ENCODE measurements at regions of chr6 and their contacts with region 1.

Region 1: GRCh38 chr6:129251669-129252376 is 368.9 kb downstream of the LAMA2 start:
- DNase-seq: peak in 4 of 5 donors; percentile 29 to 64 (median 32)
- H3K4me3 ChIP-seq: no peak overlapping the region
- H3K27ac ChIP-seq: no peak overlapping the region
- H3K4me1 ChIP-seq: no peaks in the 10 kb centered on the region
- H3K27me3 ChIP-seq: no peaks in the 10 kb centered on the region
- CTCF ChIP-seq: peak; percentile 69 to 76 (median 73)
- EP300 ChIP-seq: no peak
- POLR2A ChIP-seq: no peak

Region 2: DNA sequence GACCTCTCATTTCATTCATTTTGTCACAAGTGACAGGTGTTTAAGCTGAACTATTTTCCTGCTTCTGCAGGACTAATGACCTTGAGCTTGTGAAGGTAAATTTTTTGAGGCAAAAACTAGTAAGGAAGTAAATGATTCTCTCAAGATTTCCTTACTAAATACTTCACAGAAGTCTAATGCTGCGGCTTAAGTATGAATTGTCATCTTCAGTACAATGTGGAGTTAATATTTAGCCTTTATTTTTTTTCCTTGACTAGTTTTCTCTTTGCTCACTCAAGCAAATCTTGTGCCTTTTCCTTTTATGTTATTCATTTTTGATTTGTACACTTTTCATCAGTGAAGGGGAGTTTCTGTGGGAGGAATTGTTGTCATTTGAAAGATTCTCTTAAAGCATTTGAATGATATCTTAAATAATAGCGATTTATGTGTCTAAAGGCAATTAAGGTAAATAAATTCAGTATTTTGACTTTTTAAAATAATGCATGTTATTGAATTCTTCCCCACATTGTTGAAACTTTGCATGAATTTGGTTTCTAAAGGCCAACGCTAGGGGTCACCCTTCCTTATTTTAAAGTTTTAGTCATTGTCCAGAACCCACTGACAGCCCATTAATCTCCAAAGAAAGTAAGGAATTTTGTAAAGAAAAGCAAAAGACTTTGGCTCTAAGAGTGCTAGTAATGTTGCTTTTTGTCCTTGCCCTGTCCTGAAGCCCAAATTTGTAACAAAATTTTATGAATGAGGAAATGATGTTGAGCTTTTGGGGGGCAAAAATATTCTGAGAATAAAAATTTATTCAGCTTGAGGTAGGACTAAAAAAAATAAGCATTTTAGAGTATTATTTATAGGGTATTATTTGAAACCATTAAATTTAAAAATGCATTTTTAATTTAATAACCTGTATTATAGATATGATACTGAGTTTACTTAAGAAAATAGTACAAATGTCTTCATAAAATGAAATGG is 526.3 kb before region 1 on chr6:
- intact Hi-C with region 1: loop called in 1 of 4 experiments (anchors 5 kb)
- DNase-seq: peak in 3 of 5 donors; percentile 23 to 48 (median 28)
- H3K4me3 ChIP-seq: no peak overlapping the region
- H3K27ac ChIP-seq: no peak overlapping the region
- H3K4me1 ChIP-seq: no peaks in the 10 kb centered on the region
- H3K27me3 ChIP-seq: no peaks in the 10 kb centered on the region
- CTCF ChIP-seq: peak in 2 of 3 donors; percentile 60 to 65
- EP300 ChIP-seq: no peak
- POLR2A ChIP-seq: no peak

Measured in ovary (tissue), 10 donors.